CD8-positive, alpha-beta T cell (primary cell): ENCODE measurements at regions of chr12 and their contacts with region 1.

Region 1: GRCh38 chr12:89717759-89718523 is 9.3 kb upstream of the ATP2B1 start:
- DNase-seq: no peak
- ATAC-seq: no peak
- H3K4me3 ChIP-seq: no peak overlapping the region
- H3K4me3 Mint-ChIP-seq: no peak overlapping the region
- H3K27ac ChIP-seq: no peak overlapping the region
- H3K27ac Mint-ChIP-seq: no peak overlapping the region
- H3K4me1 ChIP-seq: no peaks in the 10 kb centered on the region
- H3K4me1 Mint-ChIP-seq: no peaks in the 10 kb centered on the region
- H3K27me3 ChIP-seq: no peaks in the 10 kb centered on the region
- H3K27me3 Mint-ChIP-seq: no peaks in the 10 kb centered on the region
- CTCF ChIP-seq: no peak

Region 2: DNA sequence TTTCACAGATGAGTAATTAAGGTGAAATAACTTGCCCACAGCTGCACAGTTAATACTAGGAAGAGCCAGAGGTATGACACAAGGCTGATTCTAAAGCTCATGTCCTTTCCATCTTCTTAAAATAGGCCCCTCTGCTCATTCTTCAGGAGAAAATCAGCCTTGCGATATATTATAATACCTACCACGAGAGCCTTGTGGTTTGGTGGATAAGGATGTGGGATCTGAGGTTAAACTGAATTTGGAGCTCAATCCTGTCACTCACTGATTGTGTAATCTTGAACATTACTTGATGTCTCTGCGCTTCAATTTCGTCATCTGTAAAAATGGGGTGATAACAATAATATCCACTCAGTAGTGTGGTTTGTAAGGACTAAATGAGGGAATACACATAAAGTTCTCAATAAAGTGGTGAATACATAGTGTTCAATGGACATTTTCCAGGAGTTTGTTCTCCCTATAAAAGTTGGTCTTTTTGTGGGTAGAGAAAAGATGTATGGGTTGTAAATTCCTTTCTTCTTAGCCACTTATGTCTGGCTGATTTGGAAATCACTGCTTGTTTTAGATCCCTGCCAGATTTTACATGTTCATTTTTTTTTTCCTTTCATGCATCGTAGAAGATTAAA is 15.7 kb after region 1 on chr12:
- CTCF ChIA-PET with region 1: no interaction called
- POLR2A ChIA-PET with region 1: no interaction called
- intact Hi-C with region 1: no loop called
- DNase-seq: peak in 2 of 9 experiments; percentile 37 to 53
- ATAC-seq: peak; percentile 36
- H3K4me3 ChIP-seq: no peak overlapping the region
- H3K4me3 Mint-ChIP-seq: no peak overlapping the region
- H3K27ac ChIP-seq: no peak overlapping the region
- H3K27ac Mint-ChIP-seq: no peak overlapping the region
- H3K4me1 ChIP-seq: peaks cover 5% of the 10 kb centered on the region
- H3K4me1 Mint-ChIP-seq: peaks cover 7% of the 10 kb centered on the region
- H3K27me3 ChIP-seq: no peaks in the 10 kb centered on the region
- H3K27me3 Mint-ChIP-seq: no peaks in the 10 kb centered on the region
- CTCF ChIP-seq: no peak

Region 3: DNA sequence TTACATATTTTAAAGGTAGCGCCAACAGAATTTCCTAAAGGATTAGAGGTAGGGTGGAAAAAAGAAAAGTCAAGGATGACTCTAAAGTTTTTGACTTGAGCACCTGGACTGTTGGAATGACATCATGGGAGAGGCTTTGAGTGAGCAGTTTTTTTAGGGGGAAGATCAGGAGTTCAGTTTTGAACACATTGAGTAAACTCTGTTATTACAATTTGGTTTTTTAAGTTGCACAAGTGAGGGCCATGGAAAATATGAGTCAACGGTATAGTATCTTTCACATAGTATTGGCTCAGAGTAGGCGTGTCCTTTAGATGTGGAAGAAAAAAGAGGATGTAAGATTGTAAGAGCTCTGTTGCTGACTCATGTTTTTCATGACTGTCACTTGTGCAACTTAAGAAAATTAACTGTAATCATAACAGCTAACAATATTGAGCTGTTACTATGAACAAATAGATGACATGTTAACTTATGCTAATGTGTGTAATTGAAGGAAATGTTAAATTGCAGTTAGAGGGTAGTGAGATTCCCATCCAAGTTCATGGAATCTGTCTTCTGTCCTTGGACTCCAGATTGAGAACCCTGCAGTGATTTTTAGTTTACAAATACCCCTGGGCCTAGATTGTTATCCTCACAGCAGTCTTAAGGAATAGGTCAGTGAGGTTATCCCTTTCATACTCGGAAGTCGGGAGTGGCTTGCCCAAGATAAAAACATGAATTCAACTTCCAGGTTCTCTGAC is 38.8 kb after region 1 on chr12:
- CTCF ChIA-PET with region 1: no interaction called
- POLR2A ChIA-PET with region 1: no interaction called
- intact Hi-C with region 1: loop called in 1 of 2 experiments (anchors 5 kb)
- DNase-seq: peak in 2 of 9 experiments; percentile 64 to 78
- ATAC-seq: peak; percentile 78
- H3K4me3 ChIP-seq: no peak overlapping the region
- H3K4me3 Mint-ChIP-seq: no peak overlapping the region
- H3K27ac ChIP-seq: peak overlapping the region in 1 of 2 experiments; percentile 44
- H3K27ac Mint-ChIP-seq: peak overlapping the region; percentile 50
- H3K4me1 ChIP-seq: peaks cover 15% of the 10 kb centered on the region
- H3K4me1 Mint-ChIP-seq: peaks cover 37% of the 10 kb centered on the region
- H3K27me3 ChIP-seq: no peaks in the 10 kb centered on the region
- H3K27me3 Mint-ChIP-seq: no peaks in the 10 kb centered on the region
- CTCF ChIP-seq: no peak